Activated B cell treated with CpG ODN at 0.5 μM for 24 hours (primary cell): ENCODE measurements at regions of chr14 and their contacts with region 1.

Region 1: DNA sequence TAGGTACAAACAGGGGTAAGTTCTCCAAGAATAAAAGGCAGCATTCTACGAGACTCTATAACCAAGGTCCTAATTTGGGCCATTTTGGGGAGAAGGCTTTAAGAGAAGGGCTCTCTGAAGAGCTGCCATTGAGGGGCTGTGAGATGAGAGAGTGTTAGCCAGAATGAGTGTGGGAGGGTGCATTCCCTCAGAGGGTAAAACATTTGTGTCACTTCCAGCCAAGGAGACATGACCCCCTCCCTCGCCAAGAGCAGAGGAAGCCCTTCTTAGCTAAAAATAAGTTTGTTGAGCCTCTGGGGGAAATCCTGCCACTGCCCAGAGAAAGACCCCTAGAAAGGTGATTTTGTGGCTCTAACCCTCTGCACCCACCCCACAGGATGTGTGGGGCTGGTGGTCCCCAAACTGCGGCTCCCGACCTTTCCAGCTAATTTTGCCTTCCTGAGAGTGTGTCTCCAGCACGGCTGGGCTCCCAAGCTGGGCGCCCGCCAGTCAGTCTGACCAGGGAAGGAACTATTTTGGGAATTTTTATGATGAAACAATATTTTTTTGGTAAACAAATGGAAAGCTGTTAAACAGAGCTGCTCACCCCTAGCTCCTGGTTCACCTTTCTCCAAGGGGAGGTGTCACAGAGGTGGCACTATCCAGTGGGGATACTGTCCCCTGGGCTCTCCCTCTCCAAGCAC is 65.9 kb upstream of the JDP2 start:
- DNase-seq: no peak
- ATAC-seq: no peak
- H3K4me3 Mint-ChIP-seq: no peak overlapping the region
- H3K27ac Mint-ChIP-seq: no peak overlapping the region
- H3K4me1 Mint-ChIP-seq: no peaks in the 10 kb centered on the region
- H3K27me3 Mint-ChIP-seq: peaks cover 3% of the 10 kb centered on the region
- CTCF ChIP-seq: no peak

Region 2: DNA sequence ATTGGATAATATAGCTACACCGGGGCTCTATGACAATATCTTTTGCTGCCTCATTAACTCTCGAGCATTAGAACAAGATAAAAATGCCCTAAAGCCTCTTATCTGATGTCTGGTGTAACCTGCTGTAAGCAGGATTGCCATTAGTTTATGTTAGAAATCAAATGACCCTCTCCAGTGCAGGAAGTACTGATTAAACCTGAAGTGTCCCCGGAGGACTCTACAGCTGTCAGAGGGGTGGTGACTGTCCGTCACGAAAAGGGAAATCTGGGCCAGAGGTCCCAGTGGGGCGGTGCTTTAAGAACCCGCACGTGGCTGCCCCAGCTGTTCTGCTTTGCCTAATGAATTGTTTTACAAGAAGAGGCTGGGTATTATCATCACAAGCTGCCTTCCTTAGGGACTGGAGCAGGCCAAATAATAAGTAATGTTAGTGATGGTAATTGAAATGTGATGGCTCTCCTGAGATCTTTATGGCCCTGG is 1221.5 kb before region 1 on chr14:
- CTCF ChIA-PET with region 1: no interaction called
- POLR2A ChIA-PET with region 1: interaction called, 13 read pairs
- intact Hi-C with region 1: no loop called
- DNase-seq: peak; percentile 19
- ATAC-seq: peak; percentile 90
- H3K4me3 Mint-ChIP-seq: no peak overlapping the region
- H3K27ac Mint-ChIP-seq: no peak overlapping the region
- H3K4me1 Mint-ChIP-seq: peaks cover 9% of the 10 kb centered on the region
- H3K27me3 Mint-ChIP-seq: no peaks in the 10 kb centered on the region
- CTCF ChIP-seq: no peak

Region 3: DNA sequence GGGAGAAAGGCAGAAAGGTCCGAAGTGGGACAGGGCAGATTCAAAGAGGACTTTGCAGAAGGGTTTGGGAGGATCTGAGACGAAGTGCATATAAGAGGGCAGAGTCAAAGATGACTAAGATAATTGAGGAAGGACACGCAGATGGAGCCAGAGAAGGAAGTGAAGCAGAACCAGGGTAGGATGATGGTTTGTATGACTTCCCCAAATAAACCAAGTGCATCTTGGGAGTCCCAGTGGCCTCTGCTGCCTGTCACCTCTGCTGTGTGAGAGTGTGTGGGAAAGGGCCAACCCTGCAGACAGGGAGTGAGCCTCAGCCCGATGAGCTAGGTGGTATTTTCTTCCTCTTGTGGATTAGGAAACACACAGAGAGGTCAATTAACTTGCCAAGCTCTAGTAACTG is 253.3 kb after region 1 on chr14:
- CTCF ChIA-PET with region 1: no interaction called
- POLR2A ChIA-PET with region 1: no interaction called
- intact Hi-C with region 1: no loop called
- DNase-seq: no peak
- ATAC-seq: peak; percentile 95
- H3K4me3 Mint-ChIP-seq: no peak overlapping the region
- H3K27ac Mint-ChIP-seq: peak overlapping the region; percentile 50
- H3K4me1 Mint-ChIP-seq: peaks cover 15% of the 10 kb centered on the region
- H3K27me3 Mint-ChIP-seq: no peaks in the 10 kb centered on the region
- CTCF ChIP-seq: no peak

Region 4: DNA sequence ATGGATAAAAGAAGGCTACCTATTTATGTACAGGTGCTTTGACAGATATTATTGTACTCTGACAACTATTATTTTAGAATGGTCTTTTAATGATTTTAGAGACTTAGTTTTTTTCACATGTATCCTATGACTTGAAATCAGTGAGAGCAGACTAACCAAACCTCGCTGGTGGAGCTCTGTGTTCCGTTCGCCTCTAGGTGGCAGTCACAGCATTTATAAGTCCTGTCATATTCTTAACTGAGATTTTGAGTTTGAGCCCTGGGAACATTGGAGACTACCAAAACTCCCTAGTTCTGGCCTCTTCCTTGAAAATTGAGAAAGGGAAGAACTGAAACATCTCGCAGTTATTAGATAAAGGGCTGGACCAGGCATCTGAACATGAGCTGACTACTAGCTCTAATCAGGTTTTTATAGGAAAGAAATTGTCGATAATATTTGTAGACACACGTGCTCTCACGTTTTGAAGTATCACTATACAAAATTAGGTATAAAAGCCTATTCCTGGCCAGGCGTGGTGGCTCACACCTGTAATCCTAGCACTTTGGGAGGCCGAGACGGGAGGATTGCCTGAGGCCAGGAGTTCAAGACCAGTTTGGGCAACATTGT is 347.4 kb after region 1 on chr14:
- CTCF ChIA-PET with region 1: no interaction called
- POLR2A ChIA-PET with region 1: no interaction called
- intact Hi-C with region 1: no loop called
- DNase-seq: no peak
- ATAC-seq: peak; percentile 70
- H3K4me3 Mint-ChIP-seq: no peak overlapping the region
- H3K27ac Mint-ChIP-seq: no peak overlapping the region
- H3K4me1 Mint-ChIP-seq: no peaks in the 10 kb centered on the region
- H3K27me3 Mint-ChIP-seq: no peaks in the 10 kb centered on the region
- CTCF ChIP-seq: peak; percentile 58